Naive thymus-derived CD4-positive, alpha-beta T cell (primary cell): ENCODE measurements at regions of chr17 and their contacts with region 1.

Region 1: GRCh38 chr17:46193626-46194392 is 580 bp upstream of the KANSL1 start:
- DNase-seq: peak; percentile 85 to 95 (median 92)
- ATAC-seq: peak; percentile 80
- H3K4me3 ChIP-seq: peak overlapping the region; percentile 84
- H3K4me3 Mint-ChIP-seq: peak overlapping the region; percentile 75 to 98 (median 84)
- H3K27ac ChIP-seq: peak overlapping the region; percentile 93
- H3K27ac Mint-ChIP-seq: peak overlapping the region; percentile 87 to 100 (median 97)
- H3K4me1 ChIP-seq: peaks cover 47 to 51% of the 10 kb centered on the region in 2 donors
- H3K4me1 Mint-ChIP-seq: peaks cover 44 to 67% (median 61%) of the 10 kb centered on the region in 7 donors
- H3K27me3 ChIP-seq: no peaks in the 10 kb centered on the region
- H3K27me3 Mint-ChIP-seq: no peaks in the 10 kb centered on the region

Region 2: DNA sequence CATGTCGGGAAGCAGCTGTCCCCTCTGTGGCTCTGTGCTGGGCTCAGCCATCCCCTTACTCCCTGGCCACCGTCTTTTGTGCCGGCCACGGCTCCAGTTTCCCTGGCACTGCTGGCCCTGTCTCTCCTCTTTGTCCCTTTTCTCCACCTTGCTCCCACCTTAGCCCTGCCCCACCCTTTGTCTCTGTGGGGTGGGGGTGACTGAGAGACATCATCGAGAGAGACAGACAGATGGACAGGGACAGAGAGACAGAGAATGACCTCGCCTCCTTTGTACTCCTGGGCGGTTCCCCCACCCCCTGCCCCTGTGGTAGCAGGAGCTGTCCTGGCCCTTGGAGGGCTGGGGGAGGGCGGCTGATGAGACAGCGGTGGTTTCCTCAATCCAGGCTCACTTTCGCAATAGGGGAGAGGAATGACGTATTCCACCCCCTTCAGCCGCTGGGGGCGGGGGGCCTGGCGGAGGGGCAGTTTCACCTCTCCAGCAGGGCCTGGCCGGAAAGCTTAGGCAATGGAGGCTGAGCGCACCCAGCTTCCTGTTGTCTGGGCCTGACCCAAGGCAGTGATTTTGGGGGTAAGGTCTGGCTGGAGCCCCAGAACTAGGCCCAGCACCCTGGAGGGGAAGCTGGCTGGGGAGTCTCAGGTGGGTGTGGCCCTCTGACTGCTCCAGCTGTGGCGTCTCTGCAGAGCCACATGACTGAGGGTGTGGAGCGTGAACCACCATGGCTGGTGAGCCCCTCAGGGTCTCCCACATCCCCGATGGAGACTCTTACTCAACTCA is 964.9 kb before region 1 on chr17:
- CTCF ChIA-PET with region 1: no interaction called
- POLR2A ChIA-PET with region 1: no interaction called
- intact Hi-C with region 1: loop called in 1 of 2 experiments (anchors 5 kb)
- DNase-seq: peak; percentile 64 to 92 (median 74)
- ATAC-seq: peak; percentile 66
- H3K4me3 ChIP-seq: peak overlapping the region; percentile 91
- H3K4me3 Mint-ChIP-seq: peak overlapping the region; percentile 83 to 99 (median 96)
- H3K27ac ChIP-seq: peak overlapping the region; percentile 96
- H3K27ac Mint-ChIP-seq: peak overlapping the region; percentile 96 to 100 (median 99)
- H3K4me1 ChIP-seq: peaks cover 62 to 77% of the 10 kb centered on the region in 2 donors
- H3K4me1 Mint-ChIP-seq: peaks cover 54 to 91% (median 77%) of the 10 kb centered on the region in 7 donors
- H3K27me3 ChIP-seq: no peaks in the 10 kb centered on the region
- H3K27me3 Mint-ChIP-seq: no peaks in the 10 kb centered on the region

Region 3: GRCh38 chr17:45719335-45720071 is 474.3 kb before region 1 on chr17:
- CTCF ChIA-PET with region 1: no interaction called
- POLR2A ChIA-PET with region 1: no interaction called
- intact Hi-C with region 1: no loop called
- DNase-seq: no peak
- ATAC-seq: no peak
- H3K4me3 ChIP-seq: no peak overlapping the region
- H3K4me3 Mint-ChIP-seq: no peak overlapping the region
- H3K27ac ChIP-seq: no peak overlapping the region
- H3K27ac Mint-ChIP-seq: no peak overlapping the region
- H3K4me1 ChIP-seq: no peaks in the 10 kb centered on the region
- H3K4me1 Mint-ChIP-seq: no peaks in the 10 kb centered on the region
- H3K27me3 ChIP-seq: no peaks in the 10 kb centered on the region
- H3K27me3 Mint-ChIP-seq: peaks cover 29 to 54% (median 39%) of the 10 kb centered on the region in 5 donors

Region 4: DNA sequence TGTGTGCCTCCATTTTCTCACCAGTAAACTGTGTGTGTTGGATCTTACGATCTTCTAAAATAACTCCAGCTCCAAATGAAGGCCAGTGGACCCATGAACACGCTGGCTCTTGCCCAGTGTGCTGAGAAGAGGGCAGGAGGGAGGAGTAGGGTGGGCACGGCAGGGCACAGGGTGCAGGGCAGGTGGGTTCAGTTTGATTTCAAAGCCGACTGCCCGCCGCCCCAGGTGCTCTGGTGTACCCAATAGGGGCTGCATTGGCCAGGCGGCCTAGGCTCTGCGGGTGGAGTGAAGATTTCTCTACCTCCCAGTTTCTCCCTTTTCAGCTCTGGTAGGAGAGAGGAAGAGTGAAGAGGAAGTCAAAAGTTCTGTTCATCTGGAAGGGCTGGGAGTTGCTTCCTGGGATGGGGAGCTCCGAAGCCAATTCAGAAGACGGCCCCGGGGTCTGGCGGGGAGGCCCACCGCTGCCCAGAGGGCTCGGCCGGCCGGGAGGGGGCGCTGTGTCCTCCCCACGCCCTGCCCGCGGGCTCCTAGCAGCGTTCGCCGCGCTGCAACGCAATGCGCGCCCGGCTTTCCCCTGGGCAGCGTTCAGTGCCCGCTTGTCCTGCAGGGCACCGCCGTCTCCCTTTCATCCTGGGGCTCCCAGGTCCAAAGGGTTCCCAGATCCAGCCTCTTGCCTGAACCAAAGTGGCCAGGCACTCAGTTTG is 410.8 kb before region 1 on chr17:
- CTCF ChIA-PET with region 1: no interaction called
- POLR2A ChIA-PET with region 1: no interaction called
- intact Hi-C with region 1: no loop called
- DNase-seq: peak in 3 of 9 donors; percentile 12 to 55 (median 18)
- ATAC-seq: peak; percentile 51
- H3K4me3 ChIP-seq: no peak overlapping the region
- H3K4me3 Mint-ChIP-seq: peak overlapping the region; percentile 59 to 83 (median 74)
- H3K27ac ChIP-seq: no peak overlapping the region
- H3K27ac Mint-ChIP-seq: peak overlapping the region in 1 of 9 donors; percentile 59
- H3K4me1 ChIP-seq: no peaks in the 10 kb centered on the region
- H3K4me1 Mint-ChIP-seq: peaks cover 0 to 9% (median 4%) of the 10 kb centered on the region in 7 donors
- H3K27me3 ChIP-seq: peaks cover 5 to 12% of the 10 kb centered on the region in 2 donors
- H3K27me3 Mint-ChIP-seq: peaks cover 58 to 76% (median 70%) of the 10 kb centered on the region in 5 donors

Region 5: GRCh38 chr17:46002311-46002972 is 191.4 kb before region 1 on chr17:
- CTCF ChIA-PET with region 1: interaction called, 3 read pairs
- POLR2A ChIA-PET with region 1: no interaction called
- intact Hi-C with region 1: loop called (anchors 1 to 2 kb)
- DNase-seq: peak; percentile 43 to 81 (median 70)
- ATAC-seq: peak; percentile 96
- H3K4me3 ChIP-seq: no peak overlapping the region
- H3K4me3 Mint-ChIP-seq: no peak overlapping the region
- H3K27ac ChIP-seq: no peak overlapping the region
- H3K27ac Mint-ChIP-seq: no peak overlapping the region
- H3K4me1 ChIP-seq: no peaks in the 10 kb centered on the region
- H3K4me1 Mint-ChIP-seq: peaks cover 0 to 4% (median 0%) of the 10 kb centered on the region in 7 donors
- H3K27me3 ChIP-seq: no peaks in the 10 kb centered on the region
- H3K27me3 Mint-ChIP-seq: peaks cover 0 to 5% (median 0%) of the 10 kb centered on the region in 5 donors

Region 6: GRCh38 chr17:46139432-46140210 is 54.2 kb before region 1 on chr17:
- CTCF ChIA-PET with region 1: interaction called, 3 read pairs
- POLR2A ChIA-PET with region 1: interaction called, 4 read pairs
- intact Hi-C with region 1: loop called in 1 of 2 experiments (anchors 1 kb)
- DNase-seq: no peak
- ATAC-seq: no peak
- H3K4me3 ChIP-seq: no peak overlapping the region
- H3K4me3 Mint-ChIP-seq: peak overlapping the region in 9 of 10 donors; percentile 5 to 67 (median 52)
- H3K27ac ChIP-seq: peak overlapping the region; percentile 10
- H3K27ac Mint-ChIP-seq: peak overlapping the region in 8 of 9 donors; percentile 24 to 82 (median 53)
- H3K4me1 ChIP-seq: peaks cover 74 to 82% of the 10 kb centered on the region in 2 donors
- H3K4me1 Mint-ChIP-seq: peaks cover 71 to 98% (median 95%) of the 10 kb centered on the region in 7 donors
- H3K27me3 ChIP-seq: no peaks in the 10 kb centered on the region
- H3K27me3 Mint-ChIP-seq: no peaks in the 10 kb centered on the region

Region 7: GRCh38 chr17:46167826-46168569 is 25.8 kb before region 1 on chr17:
- CTCF ChIA-PET with region 1: interaction called, 11 read pairs
- POLR2A ChIA-PET with region 1: interaction called, 7 read pairs
- intact Hi-C with region 1: loop called in 1 of 2 experiments (anchors 2 kb)
- DNase-seq: no peak
- ATAC-seq: no peak
- H3K4me3 ChIP-seq: no peak overlapping the region
- H3K4me3 Mint-ChIP-seq: peak overlapping the region in 8 of 10 donors; percentile 36 to 54 (median 48)
- H3K27ac ChIP-seq: no peak overlapping the region
- H3K27ac Mint-ChIP-seq: peak overlapping the region in 8 of 9 donors; percentile 6 to 76 (median 46)
- H3K4me1 ChIP-seq: peaks cover 40 to 55% of the 10 kb centered on the region in 2 donors
- H3K4me1 Mint-ChIP-seq: peaks cover 63 to 92% (median 86%) of the 10 kb centered on the region in 7 donors
- H3K27me3 ChIP-seq: no peaks in the 10 kb centered on the region
- H3K27me3 Mint-ChIP-seq: no peaks in the 10 kb centered on the region

Region 8: GRCh38 chr17:46212634-46213435 is 19.0 kb after region 1 on chr17:
- CTCF ChIA-PET with region 1: interaction called, 40 read pairs
- POLR2A ChIA-PET with region 1: interaction called, 37 read pairs
- intact Hi-C with region 1: loop called (anchors 1 kb)
- DNase-seq: peak in 7 of 9 donors; percentile 64 to 83 (median 77)
- ATAC-seq: peak; percentile 92
- H3K4me3 ChIP-seq: no peak overlapping the region
- H3K4me3 Mint-ChIP-seq: peak overlapping the region in 6 of 10 donors; percentile 7 to 35 (median 18)
- H3K27ac ChIP-seq: no peak overlapping the region
- H3K27ac Mint-ChIP-seq: peak overlapping the region in 8 of 9 donors; percentile 46 to 89 (median 80)
- H3K4me1 ChIP-seq: peaks cover 0 to 3% of the 10 kb centered on the region in 2 donors
- H3K4me1 Mint-ChIP-seq: peaks cover 24 to 69% (median 50%) of the 10 kb centered on the region in 7 donors
- H3K27me3 ChIP-seq: no peaks in the 10 kb centered on the region
- H3K27me3 Mint-ChIP-seq: no peaks in the 10 kb centered on the region

Region 9: DNA sequence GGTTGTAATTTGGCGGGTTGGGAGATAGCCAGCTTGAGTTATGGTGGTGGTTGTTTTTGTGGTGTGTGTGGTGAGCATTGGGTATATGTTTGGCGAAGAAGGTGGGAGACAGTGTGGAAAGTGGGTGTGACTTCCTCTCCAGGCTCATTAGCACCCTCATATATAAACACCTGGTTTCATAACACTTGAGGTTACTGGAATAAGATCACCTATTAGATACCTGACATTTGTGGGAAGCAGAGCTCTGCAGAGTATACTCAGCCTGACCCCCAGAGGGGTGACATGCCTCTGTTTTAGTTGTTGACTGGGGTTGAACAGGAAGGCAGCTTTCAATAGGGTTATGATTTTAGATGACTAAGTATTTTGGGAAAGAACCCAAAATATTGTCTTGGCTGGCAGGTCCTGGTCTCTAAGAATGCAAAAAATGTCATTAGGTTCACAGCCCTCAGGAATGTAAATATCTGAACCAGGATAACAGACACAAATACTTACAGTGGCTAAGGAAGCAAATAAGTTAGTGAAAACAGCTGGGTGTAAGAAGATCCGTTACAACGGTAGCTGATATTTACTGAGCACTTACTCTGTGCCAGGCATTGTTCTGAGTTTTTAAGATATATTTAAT is 1111.6 kb after region 1 on chr17:
- CTCF ChIA-PET with region 1: no interaction called
- POLR2A ChIA-PET with region 1: no interaction called
- intact Hi-C with region 1: no loop called
- DNase-seq: no peak
- ATAC-seq: peak; percentile 20
- H3K4me3 ChIP-seq: no peak overlapping the region
- H3K4me3 Mint-ChIP-seq: no peak overlapping the region
- H3K27ac ChIP-seq: no peak overlapping the region
- H3K27ac Mint-ChIP-seq: peak overlapping the region in 2 of 9 donors; percentile 1 to 24
- H3K4me1 ChIP-seq: no peaks in the 10 kb centered on the region
- H3K4me1 Mint-ChIP-seq: peaks cover 6 to 11% (median 8%) of the 10 kb centered on the region in 7 donors
- H3K27me3 ChIP-seq: no peaks in the 10 kb centered on the region
- H3K27me3 Mint-ChIP-seq: peaks cover 0 to 4% (median 0%) of the 10 kb centered on the region in 5 donors